Naive thymus-derived CD4-positive, alpha-beta T cell (primary cell): ENCODE measurements at regions of chrX and their contacts with region 1.

Region 1: GRCh38 chrX:112642349-112642748 is 37.4 kb downstream of the LHFPL1 start:
- DNase-seq: peak in 5 of 9 donors; percentile 4 to 38 (median 31)
- ATAC-seq: peak; percentile 66
- H3K4me3 ChIP-seq: no peak overlapping the region
- H3K4me3 Mint-ChIP-seq: no peak overlapping the region
- H3K27ac ChIP-seq: no peak overlapping the region
- H3K27ac Mint-ChIP-seq: no peak overlapping the region
- H3K4me1 ChIP-seq: no peaks in the 10 kb centered on the region
- H3K4me1 Mint-ChIP-seq: peaks cover 2 to 21% (median 4%) of the 10 kb centered on the region in 7 donors
- H3K27me3 ChIP-seq: no peaks in the 10 kb centered on the region
- H3K27me3 Mint-ChIP-seq: peaks cover 0 to 3% (median 0%) of the 10 kb centered on the region in 5 donors

Region 2: DNA sequence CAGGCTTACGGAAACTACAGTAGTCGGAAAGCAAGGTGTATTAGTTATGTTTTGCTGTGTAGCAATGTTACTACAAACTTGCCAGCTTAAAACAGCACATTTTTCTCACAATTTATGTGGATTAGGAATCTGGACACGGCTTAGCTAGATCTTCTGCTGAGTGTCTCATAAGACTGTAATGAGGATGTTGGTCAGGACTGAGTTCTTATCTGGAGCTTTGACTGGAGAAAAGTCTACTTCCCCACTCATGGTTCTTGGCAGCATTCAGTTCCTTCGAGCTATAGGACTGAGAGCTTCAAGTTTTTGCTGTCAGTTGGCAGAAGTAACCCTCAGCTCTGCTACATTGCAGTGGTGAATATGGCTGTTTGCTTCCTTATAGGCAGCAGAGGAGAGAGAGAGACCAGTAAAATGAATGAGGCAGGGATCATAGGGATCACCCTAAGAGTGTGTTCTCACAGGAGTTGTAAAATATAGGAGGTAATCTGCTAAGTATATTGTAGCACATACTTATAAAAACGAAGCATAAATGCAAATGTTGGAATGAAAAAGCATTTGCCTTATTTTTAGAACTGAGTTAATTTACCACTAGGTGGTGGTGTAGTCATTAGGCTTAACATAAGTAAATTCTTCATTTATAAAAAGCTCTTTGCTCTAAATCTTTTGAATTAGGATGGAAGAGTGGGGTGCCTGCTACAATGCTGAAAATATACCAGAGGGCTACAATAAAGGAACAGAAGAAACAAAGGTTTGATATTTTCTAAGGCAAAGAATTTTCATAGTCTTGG is 922.7 kb before region 1 on chrX:
- CTCF ChIA-PET with region 1: no interaction called
- POLR2A ChIA-PET with region 1: no interaction called
- intact Hi-C with region 1: loop called in 1 of 2 experiments (anchors 10 kb)
- DNase-seq: no peak
- ATAC-seq: no peak
- H3K4me3 ChIP-seq: no peak overlapping the region
- H3K4me3 Mint-ChIP-seq: no peak overlapping the region
- H3K27ac ChIP-seq: no peak overlapping the region
- H3K27ac Mint-ChIP-seq: peak overlapping the region in 1 of 9 donors; percentile 90
- H3K4me1 ChIP-seq: no peaks in the 10 kb centered on the region
- H3K4me1 Mint-ChIP-seq: peaks cover 0 to 5% (median 0%) of the 10 kb centered on the region in 7 donors
- H3K27me3 ChIP-seq: no peaks in the 10 kb centered on the region
- H3K27me3 Mint-ChIP-seq: no peaks in the 10 kb centered on the region

Region 3: GRCh38 chrX:111869639-111870034 is 772.7 kb before region 1 on chrX:
- CTCF ChIA-PET with region 1: no interaction called
- POLR2A ChIA-PET with region 1: no interaction called
- intact Hi-C with region 1: loop called in 1 of 2 experiments (anchors 1 kb)
- DNase-seq: peak in 4 of 9 donors; percentile 5 to 22 (median 10)
- ATAC-seq: no peak
- H3K4me3 ChIP-seq: no peak overlapping the region
- H3K4me3 Mint-ChIP-seq: no peak overlapping the region
- H3K27ac ChIP-seq: no peak overlapping the region
- H3K27ac Mint-ChIP-seq: no peak overlapping the region
- H3K4me1 ChIP-seq: no peaks in the 10 kb centered on the region
- H3K4me1 Mint-ChIP-seq: peaks cover 0 to 7% (median 0%) of the 10 kb centered on the region in 7 donors
- H3K27me3 ChIP-seq: no peaks in the 10 kb centered on the region
- H3K27me3 Mint-ChIP-seq: peaks cover 0 to 10% (median 4%) of the 10 kb centered on the region in 5 donors

Region 4: DNA sequence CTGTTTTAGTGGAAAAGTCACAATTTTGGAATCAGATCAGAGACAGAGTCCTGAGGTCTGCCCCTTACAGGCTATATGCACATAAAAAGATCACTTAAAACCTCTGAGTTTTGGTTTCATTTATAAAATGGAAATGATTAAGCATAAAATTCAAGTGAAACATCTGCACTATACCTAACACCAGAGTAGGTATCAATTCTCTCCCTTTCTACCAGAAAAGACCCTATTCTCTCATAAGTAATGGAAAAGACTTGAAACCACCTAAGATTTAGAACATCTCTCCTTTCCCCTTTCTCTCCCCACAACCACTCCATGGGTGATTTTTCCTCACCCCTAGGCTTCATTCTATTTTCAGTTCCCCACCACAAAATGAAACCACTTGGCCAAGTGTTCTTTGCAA is 36.5 kb after region 1 on chrX:
- CTCF ChIA-PET with region 1: no interaction called
- POLR2A ChIA-PET with region 1: interaction called, 4 read pairs
- intact Hi-C with region 1: loop called (anchors 1 to 5 kb)
- DNase-seq: peak in 1 of 9 donors; percentile 8
- ATAC-seq: no peak
- H3K4me3 ChIP-seq: peak overlapping the region; percentile 68
- H3K4me3 Mint-ChIP-seq: peak overlapping the region in 9 of 10 donors; percentile 76 to 87 (median 83)
- H3K27ac ChIP-seq: peak overlapping the region; percentile 69
- H3K27ac Mint-ChIP-seq: peak overlapping the region; percentile 68 to 95 (median 87)
- H3K4me1 ChIP-seq: peaks cover 10 to 13% of the 10 kb centered on the region in 2 donors
- H3K4me1 Mint-ChIP-seq: peaks cover 14 to 50% (median 48%) of the 10 kb centered on the region in 7 donors
- H3K27me3 ChIP-seq: no peaks in the 10 kb centered on the region
- H3K27me3 Mint-ChIP-seq: peaks cover 0 to 2% (median 0%) of the 10 kb centered on the region in 5 donors